Caco-2 (cell line): ENCODE measurements at regions of chr1 and their contacts with region 1.

Region 1: DNA sequence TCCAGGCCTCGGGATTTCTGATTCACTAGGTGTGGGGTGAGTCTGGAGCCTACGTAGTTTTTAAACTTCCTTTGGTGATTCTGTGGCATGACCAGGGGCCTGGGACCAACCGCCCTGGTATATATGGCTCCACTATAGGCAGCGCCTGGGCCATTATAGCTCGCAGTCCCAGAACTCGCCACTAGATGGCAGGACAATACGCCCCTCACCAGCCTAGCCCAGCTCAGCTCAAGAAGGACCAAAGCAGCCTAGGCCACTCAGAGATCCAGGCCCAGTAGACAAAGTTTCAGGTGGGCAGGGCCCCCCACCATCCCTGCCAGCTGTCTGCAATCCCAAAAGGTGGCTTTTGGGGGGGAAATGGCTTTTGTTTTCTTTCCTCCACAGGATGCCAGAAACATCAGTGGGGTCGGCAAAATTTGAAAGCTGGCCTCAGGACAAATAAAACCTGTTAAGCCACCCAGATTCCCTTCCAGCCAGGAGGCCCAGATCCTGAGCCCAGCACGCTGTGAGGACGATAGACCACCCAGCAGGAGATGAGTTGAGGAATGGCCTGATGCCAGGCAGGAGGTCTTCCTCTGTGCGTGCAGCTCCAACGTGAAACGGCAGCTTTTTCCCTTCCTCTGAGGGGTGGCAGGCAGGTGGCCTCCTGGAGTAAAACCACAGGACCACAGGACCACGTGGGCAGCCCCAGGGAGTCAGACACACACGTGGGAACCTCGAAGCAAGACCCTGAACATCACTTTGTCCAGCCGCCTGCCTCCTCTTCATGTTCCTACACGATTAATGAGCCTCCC is 24.8 kb upstream of the TMEM51 start:
- DNase-seq: peak; percentile 72 to 82
- H3K4me3 ChIP-seq: no peak overlapping the region
- H3K4me3 Mint-ChIP-seq: no peak overlapping the region
- H3K27ac Mint-ChIP-seq: no peak overlapping the region
- H3K4me1 ChIP-seq: peaks cover 8% of the 10 kb centered on the region; the same call in 1 of the 2 replicates
- H3K4me1 Mint-ChIP-seq: no peaks in the 10 kb centered on the region
- H3K27me3 ChIP-seq: no peaks in the 10 kb centered on the region
- H3K27me3 Mint-ChIP-seq: no peaks in the 10 kb centered on the region
- CTCF ChIP-seq: peak; percentile 78 to 79

Region 2: GRCh38 chr1:14881775-14882672 is 246.7 kb before region 1 on chr1:
- CTCF ChIA-PET with region 1: no interaction called
- POLR2A ChIA-PET with region 1: no interaction called
- intact Hi-C with region 1: no loop called
- DNase-seq: no peak
- H3K4me3 ChIP-seq: no peak overlapping the region
- H3K4me3 Mint-ChIP-seq: no peak overlapping the region
- H3K27ac Mint-ChIP-seq: no peak overlapping the region
- H3K4me1 ChIP-seq: no peaks in the 10 kb centered on the region
- H3K4me1 Mint-ChIP-seq: no peaks in the 10 kb centered on the region
- H3K27me3 ChIP-seq: no peaks in the 10 kb centered on the region
- H3K27me3 Mint-ChIP-seq: peaks cover 4% of the 10 kb centered on the region
- CTCF ChIP-seq: no peak

Region 3: GRCh38 chr1:15075817-15076216 is 52.9 kb before region 1 on chr1:
- CTCF ChIA-PET with region 1: no interaction called
- POLR2A ChIA-PET with region 1: no interaction called
- intact Hi-C with region 1: no loop called
- DNase-seq: no peak
- H3K4me3 ChIP-seq: no peak overlapping the region
- H3K4me3 Mint-ChIP-seq: no peak overlapping the region
- H3K27ac Mint-ChIP-seq: no peak overlapping the region
- H3K4me1 ChIP-seq: no peaks in the 10 kb centered on the region
- H3K4me1 Mint-ChIP-seq: no peaks in the 10 kb centered on the region
- H3K27me3 ChIP-seq: no peaks in the 10 kb centered on the region
- H3K27me3 Mint-ChIP-seq: no peaks in the 10 kb centered on the region
- CTCF ChIP-seq: no peak

Region 4: DNA sequence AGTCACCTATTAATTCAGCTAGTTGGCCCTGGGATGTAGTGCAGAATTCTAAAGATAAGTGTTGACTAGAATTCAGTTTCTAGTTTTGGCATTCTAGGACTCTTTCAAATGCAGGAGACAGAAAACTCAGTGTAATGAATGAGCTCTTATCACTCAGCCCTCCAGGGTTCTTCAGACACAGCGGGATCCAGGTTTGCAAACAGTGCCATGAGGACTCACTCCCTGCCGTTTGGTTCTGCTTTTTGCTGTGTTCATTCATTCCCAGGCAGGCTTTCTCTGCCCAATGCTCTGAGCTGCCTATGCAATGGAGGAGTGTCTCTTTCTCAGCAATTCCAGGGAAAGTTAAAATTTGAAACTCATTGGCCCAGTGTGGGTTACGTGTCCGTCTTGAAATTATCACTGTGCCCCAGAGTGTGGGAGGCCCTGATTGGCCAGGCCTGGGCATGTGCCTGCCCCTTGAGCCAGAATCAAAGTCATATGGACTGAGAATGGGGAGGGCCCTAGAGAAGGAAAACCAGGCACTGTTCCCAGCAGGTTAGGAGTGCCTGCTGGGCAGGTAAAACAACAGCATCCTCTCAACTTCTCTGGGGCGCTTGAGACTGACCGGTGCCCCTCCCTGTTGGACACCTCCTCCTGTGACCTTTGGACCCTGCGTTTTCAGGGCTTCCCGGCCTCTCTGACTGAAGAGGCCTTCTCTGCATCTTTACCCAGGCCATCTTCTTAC is 68.3 kb after region 1 on chr1:
- CTCF ChIA-PET with region 1: interaction called, 6 read pairs
- POLR2A ChIA-PET with region 1: no interaction called
- intact Hi-C with region 1: loop called (anchors 1 kb)
- DNase-seq: peak; percentile 75 to 81
- H3K4me3 ChIP-seq: no peak overlapping the region
- H3K4me3 Mint-ChIP-seq: peak overlapping the region; percentile 43
- H3K27ac Mint-ChIP-seq: peak overlapping the region; percentile 80
- H3K4me1 ChIP-seq: peaks cover 64% of the 10 kb centered on the region
- H3K4me1 Mint-ChIP-seq: peaks cover 43% of the 10 kb centered on the region
- H3K27me3 ChIP-seq: no peaks in the 10 kb centered on the region
- H3K27me3 Mint-ChIP-seq: no peaks in the 10 kb centered on the region
- CTCF ChIP-seq: no peak

Region 5: DNA sequence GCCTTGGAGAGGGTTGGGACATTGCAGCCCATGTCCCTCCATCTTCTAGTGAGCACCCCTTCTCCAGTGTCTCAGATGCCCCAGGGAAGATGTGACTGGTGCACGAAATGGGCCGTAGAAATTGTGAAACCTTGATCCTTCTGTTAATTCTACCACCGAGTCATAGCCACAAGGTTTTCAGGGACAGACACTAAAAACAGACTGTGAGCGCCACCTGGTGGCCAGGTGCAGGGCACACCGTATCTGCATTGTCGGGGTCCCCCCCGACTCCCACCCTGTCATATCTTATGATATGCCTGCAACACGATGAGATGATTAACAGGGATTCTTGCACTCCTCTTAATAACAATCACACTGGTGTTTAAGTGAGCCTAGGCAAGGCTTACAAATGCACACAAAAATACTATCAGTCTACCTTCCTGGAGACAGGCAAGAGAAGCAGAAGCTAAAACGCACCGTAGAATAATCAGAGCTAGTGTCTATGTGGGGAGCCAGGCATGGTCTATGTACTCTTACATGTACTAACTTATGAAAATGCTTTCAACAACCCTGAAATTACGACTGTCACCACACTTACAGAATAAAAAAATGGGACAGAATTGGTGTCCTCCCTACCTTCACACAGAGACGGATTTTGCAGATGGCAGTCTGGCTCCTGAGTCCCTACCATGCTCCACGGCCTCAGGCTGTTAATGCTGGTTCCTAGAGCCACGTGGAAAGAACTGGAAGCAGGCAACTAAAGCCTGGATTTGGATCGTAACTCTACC is 176.2 kb after region 1 on chr1:
- CTCF ChIA-PET with region 1: interaction called, 8 read pairs
- POLR2A ChIA-PET with region 1: no interaction called
- intact Hi-C with region 1: loop called (anchors 1 kb)
- DNase-seq: peak; percentile 50 to 69
- H3K4me3 ChIP-seq: no peak overlapping the region
- H3K4me3 Mint-ChIP-seq: no peak overlapping the region
- H3K27ac Mint-ChIP-seq: no peak overlapping the region
- H3K4me1 ChIP-seq: peaks cover 12% of the 10 kb centered on the region
- H3K4me1 Mint-ChIP-seq: no peaks in the 10 kb centered on the region
- H3K27me3 ChIP-seq: no peaks in the 10 kb centered on the region
- H3K27me3 Mint-ChIP-seq: no peaks in the 10 kb centered on the region
- CTCF ChIP-seq: peak; percentile 72 to 92